Aorta (tissue), 5 donors: ENCODE measurements at regions of chr6 and their contacts with region 1.

Region 1: DNA sequence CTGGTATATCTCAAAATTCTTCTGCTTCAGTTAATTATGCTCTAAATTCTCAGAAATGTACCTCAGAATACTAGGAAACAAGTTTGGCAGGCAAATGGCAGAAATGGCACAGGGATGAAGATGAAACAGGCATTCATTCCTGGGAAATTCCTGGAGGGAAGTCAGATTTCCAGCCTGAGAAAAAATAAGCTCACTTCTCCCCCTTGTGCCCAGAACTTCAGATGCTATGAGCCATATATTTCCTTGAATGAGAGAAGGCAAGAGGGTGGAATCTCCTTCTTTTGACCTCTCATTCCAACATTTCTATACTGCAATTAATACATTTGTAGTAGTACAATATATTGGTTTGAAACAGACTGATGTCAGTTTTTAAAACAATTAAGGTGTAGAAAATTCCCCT is 22.8 kb downstream of the RGS17 start:
- DNase-seq: no peak
- ATAC-seq: no peak
- H3K4me3 ChIP-seq: no peak overlapping the region
- H3K27ac ChIP-seq: no peak overlapping the region
- H3K4me1 ChIP-seq: peaks cover 0 to 14% of the 10 kb centered on the region in 2 donors
- H3K27me3 ChIP-seq: no peaks in the 10 kb centered on the region

Region 2: DNA sequence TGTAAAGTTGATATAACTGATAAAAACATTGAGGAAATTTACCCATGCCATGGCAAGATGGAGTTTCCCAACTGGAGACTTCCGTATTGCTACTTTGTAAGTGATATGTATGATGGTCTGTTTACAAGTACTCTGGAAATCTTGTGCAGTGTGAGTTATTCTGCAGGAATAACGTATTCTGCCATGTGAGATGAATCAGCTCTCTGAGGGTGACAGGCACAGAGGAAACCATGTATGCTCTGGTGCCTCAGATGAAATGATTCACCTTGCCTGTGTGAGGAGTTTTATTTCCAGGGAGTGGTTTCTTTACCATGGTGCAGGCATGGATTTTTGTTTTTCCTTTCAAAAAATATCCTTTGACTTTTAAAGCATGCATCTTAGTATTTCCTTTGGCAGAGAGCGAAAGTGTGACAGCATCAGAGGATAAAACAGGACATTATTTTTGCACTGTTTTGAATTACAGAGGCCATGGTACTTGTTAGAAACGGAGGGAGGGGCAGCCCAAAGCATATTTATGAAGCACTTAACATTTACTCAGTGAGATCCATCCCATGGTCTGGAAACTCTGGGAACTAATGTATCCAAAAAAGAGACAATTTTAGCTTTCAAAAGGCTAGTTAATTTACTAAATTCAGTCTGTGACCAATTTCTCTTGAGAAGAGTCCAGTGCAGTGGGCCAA is 69.8 kb before region 1 on chr6:
- intact Hi-C with region 1: loop called in 1 of 2 experiments (anchors 2 kb)
- DNase-seq: no peak
- ATAC-seq: peak; percentile 72
- H3K4me3 ChIP-seq: peak overlapping the region in 1 of 2 donors; percentile 18
- H3K27ac ChIP-seq: peak overlapping the region; percentile 74 to 92
- H3K4me1 ChIP-seq: no peaks in the 10 kb centered on the region
- H3K27me3 ChIP-seq: no peaks in the 10 kb centered on the region

Region 3: GRCh38 chr6:153634416-153634815 is 526.1 kb after region 1 on chr6:
- intact Hi-C with region 1: no loop called
- DNase-seq: no peak
- ATAC-seq: no peak
- H3K4me3 ChIP-seq: no peak overlapping the region
- H3K27ac ChIP-seq: no peak overlapping the region
- H3K4me1 ChIP-seq: no peaks in the 10 kb centered on the region
- H3K27me3 ChIP-seq: no peaks in the 10 kb centered on the region